Mucosa of descending colon (tissue), 3 donors: ENCODE measurements at regions of chr10 and their contacts with region 1.

Region 1: GRCh38 chr10:120948889-120949608 is 97.9 kb downstream of the WDR11 start:
- DNase-seq: peak; percentile 60 to 82 (median 74)
- ATAC-seq: peak; percentile 97
- H3K4me3 ChIP-seq: no peak overlapping the region
- H3K4me1 ChIP-seq: no peaks in the 10 kb centered on the region
- CTCF ChIP-seq: peak; percentile 82

Region 2: DNA sequence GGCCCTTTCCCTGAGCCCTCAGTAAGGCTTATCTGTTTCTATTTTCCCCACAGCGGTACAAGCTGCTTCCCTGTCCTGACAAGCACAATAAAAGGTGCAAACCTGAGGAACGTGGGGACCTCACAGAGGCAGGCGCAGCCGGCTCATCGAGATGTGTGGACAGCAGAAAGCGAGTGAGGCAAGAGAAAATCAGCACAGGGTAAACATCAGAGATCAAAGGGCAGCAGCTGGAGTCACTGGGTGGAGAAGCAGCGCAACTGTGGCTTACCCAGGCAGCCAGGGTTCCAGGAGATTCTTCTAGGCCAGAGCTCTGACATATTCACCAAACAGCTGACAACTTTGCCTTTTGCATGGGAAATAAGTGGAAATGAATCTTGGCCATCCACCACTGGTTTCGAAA is 114.7 kb after region 1 on chr10:
- intact Hi-C with region 1: no loop called
- DNase-seq: peak; percentile 68 to 74 (median 68)
- ATAC-seq: peak; percentile 99
- H3K4me3 ChIP-seq: no peak overlapping the region
- H3K4me1 ChIP-seq: peaks cover 11% of the 10 kb centered on the region
- CTCF ChIP-seq: no peak

Region 3: GRCh38 chr10:121131426-121132265 is 182.6 kb after region 1 on chr10:
- intact Hi-C with region 1: no loop called
- DNase-seq: no peak
- ATAC-seq: no peak
- H3K4me3 ChIP-seq: no peak overlapping the region
- H3K4me1 ChIP-seq: no peaks in the 10 kb centered on the region
- CTCF ChIP-seq: no peak

Region 4: GRCh38 chr10:121332829-121333633 is 384.0 kb after region 1 on chr10:
- intact Hi-C with region 1: no loop called
- DNase-seq: no peak
- ATAC-seq: peak; percentile 75
- H3K4me3 ChIP-seq: no peak overlapping the region
- H3K4me1 ChIP-seq: no peaks in the 10 kb centered on the region
- CTCF ChIP-seq: no peak

Region 5: DNA sequence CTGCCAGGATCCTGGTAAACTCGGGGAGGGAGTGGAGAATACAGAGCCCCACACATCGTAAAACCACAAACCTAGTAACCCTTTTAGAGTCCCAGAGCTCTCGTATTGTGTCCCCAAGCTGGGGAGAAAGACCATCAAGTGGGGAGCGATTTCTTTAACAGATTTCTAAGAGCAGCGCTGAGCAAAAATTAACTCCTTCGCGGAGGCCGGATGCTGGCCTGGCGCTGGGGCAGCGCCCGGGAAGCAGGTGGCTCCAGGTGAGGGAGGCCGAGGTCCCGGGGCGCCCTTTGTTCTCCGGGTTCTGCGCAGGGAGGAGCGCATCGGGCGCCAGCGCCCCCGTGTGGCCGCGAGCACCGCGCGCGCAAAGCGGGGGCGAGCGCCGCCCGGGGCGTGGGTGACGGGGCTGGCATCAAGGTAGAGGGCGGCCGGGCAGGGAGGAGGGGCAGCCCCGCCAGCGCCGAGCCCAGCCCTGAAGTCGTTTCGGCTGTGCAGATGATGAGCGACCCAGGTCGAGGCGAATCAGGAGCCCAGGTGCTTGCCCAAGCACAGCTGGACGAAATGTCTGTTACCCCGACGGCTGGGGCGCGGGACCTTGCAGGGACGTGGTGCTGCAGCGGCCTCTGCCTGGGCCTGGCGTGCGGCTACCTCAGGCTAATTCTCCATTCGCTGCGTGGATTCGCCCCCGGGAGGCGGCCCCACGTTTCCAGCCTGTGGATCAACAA is 659.6 kb after region 1 on chr10:
- intact Hi-C with region 1: loop called (anchors 5 to 10 kb)
- DNase-seq: peak; percentile 72 to 84 (median 75)
- ATAC-seq: peak; percentile 95
- H3K4me3 ChIP-seq: no peak overlapping the region
- H3K4me1 ChIP-seq: no peaks in the 10 kb centered on the region
- CTCF ChIP-seq: peak; percentile 93

Region 6: GRCh38 chr10:121615435-121615793 is 666.4 kb after region 1 on chr10:
- intact Hi-C with region 1: loop called in 1 of 2 experiments (anchors 10 kb)
- DNase-seq: peak in 1 of 3 donors; percentile 32
- ATAC-seq: peak; percentile 14
- H3K4me3 ChIP-seq: no peak overlapping the region
- H3K4me1 ChIP-seq: no peaks in the 10 kb centered on the region
- CTCF ChIP-seq: no peak